ENCODE measurements at regions of chr9 and their contacts with region 1.

Region 1: GRCh38 chr9:12964271-12964670 is 189.5 kb downstream of the LURAP1L start:
- DNase-seq: no peak
- ATAC-seq: no peak
- H3K4me3 Mint-ChIP-seq: no peak overlapping the region
- H3K27ac Mint-ChIP-seq: no peak overlapping the region
- H3K4me1 Mint-ChIP-seq: no peaks in the 10 kb centered on the region
- H3K27me3 Mint-ChIP-seq: no peaks in the 10 kb centered on the region
- CTCF ChIP-seq: no peak

Region 2: GRCh38 chr9:12923468-12924009 is 40.7 kb before region 1 on chr9:
- CTCF ChIA-PET with region 1: no interaction called
- POLR2A ChIA-PET with region 1: no interaction called
- intact Hi-C with region 1: no loop called
- DNase-seq: no peak
- ATAC-seq: no peak
- H3K4me3 Mint-ChIP-seq: no peak overlapping the region
- H3K27ac Mint-ChIP-seq: no peak overlapping the region
- H3K4me1 Mint-ChIP-seq: no peaks in the 10 kb centered on the region
- H3K27me3 Mint-ChIP-seq: no peaks in the 10 kb centered on the region
- CTCF ChIP-seq: no peak

Region 3: GRCh38 chr9:12980085-12980851 is 16.0 kb after region 1 on chr9:
- CTCF ChIA-PET with region 1: no interaction called
- POLR2A ChIA-PET with region 1: no interaction called
- intact Hi-C with region 1: loop called (anchors 2 kb)
- DNase-seq: no peak
- ATAC-seq: no peak
- H3K4me3 Mint-ChIP-seq: no peak overlapping the region
- H3K27ac Mint-ChIP-seq: no peak overlapping the region
- H3K4me1 Mint-ChIP-seq: no peaks in the 10 kb centered on the region
- H3K27me3 Mint-ChIP-seq: no peaks in the 10 kb centered on the region
- CTCF ChIP-seq: no peak

Region 4: DNA sequence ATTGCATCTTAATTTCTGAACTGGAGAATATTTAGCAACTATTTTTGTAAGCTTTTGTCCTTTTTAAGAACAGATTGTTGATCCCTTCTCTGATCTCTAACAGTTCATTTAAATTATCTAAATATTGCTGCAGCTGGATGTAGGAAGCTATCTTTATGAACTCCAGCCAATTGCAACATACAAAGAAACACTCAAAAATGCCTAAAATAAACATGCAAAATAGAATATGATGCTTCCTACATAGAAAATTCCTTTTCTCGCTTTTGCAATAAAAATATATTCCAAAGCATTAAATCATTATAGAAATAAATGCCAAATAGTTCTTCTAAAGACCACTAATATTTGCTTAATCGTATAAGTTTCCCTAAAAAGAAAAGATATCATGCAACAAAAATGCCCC is 29.2 kb after region 1 on chr9:
- CTCF ChIA-PET with region 1: no interaction called
- POLR2A ChIA-PET with region 1: no interaction called
- intact Hi-C with region 1: no loop called
- DNase-seq: no peak
- ATAC-seq: no peak
- H3K4me3 Mint-ChIP-seq: no peak overlapping the region
- H3K27ac Mint-ChIP-seq: no peak overlapping the region
- H3K4me1 Mint-ChIP-seq: no peaks in the 10 kb centered on the region
- H3K27me3 Mint-ChIP-seq: no peaks in the 10 kb centered on the region
- CTCF ChIP-seq: no peak